Naive thymus-derived CD8-positive, alpha-beta T cell (primary cell): ENCODE measurements at regions of chrX and their contacts with region 1.

Region 1: GRCh38 chrX:71254092-71254941 is at the start of gene ZMYM3:
- DNase-seq: peak; percentile 68 to 93 (median 84)
- ATAC-seq: peak; percentile 82 to 84
- H3K4me3 Mint-ChIP-seq: peak within 1 kb of the TSS; percentile 84 to 98 (median 93)
- H3K27ac Mint-ChIP-seq: peak within 1 kb of the TSS; percentile 89 to 98 (median 97)
- H3K4me1 Mint-ChIP-seq: peaks cover 13 to 32% (median 23%) of the 10 kb centered on the region in 4 donors
- H3K27me3 Mint-ChIP-seq: no peaks in the 10 kb centered on the region
- polyA plus RNA-seq, gene ZMYM3: 4.8 to 6.5 (median 5.0) TPM

Region 2: GRCh38 chrX:71198066-71198465 is 56.3 kb before region 1 on chrX:
- POLR2A ChIA-PET with region 1: interaction called, 15 read pairs
- DNase-seq: peak in 3 of 10 donors; percentile 17 to 29 (median 22)
- ATAC-seq: peak; percentile 49 to 56
- H3K4me3 Mint-ChIP-seq: peak overlapping the region; percentile 78 to 94 (median 90)
- H3K27ac Mint-ChIP-seq: peak overlapping the region; percentile 86 to 98 (median 94)
- H3K4me1 Mint-ChIP-seq: peaks cover 15 to 35% (median 30%) of the 10 kb centered on the region in 4 donors
- H3K27me3 Mint-ChIP-seq: no peaks in the 10 kb centered on the region

Region 3: GRCh38 chrX:71283403-71284143 is 29.3 kb after region 1 on chrX and contains the start of gene NONO:
- POLR2A ChIA-PET with region 1: interaction called, 66 read pairs
- DNase-seq: peak; percentile 61 to 96 (median 86)
- ATAC-seq: peak; percentile 88 to 90
- H3K4me3 Mint-ChIP-seq: peak within 1 kb of the TSS; percentile 96 to 100 (median 99)
- H3K27ac Mint-ChIP-seq: peak within 1 kb of the TSS; percentile 99 to 100 (median 100)
- H3K4me1 Mint-ChIP-seq: peaks cover 1 to 32% (median 12%) of the 10 kb centered on the region in 4 donors
- H3K27me3 Mint-ChIP-seq: no peaks in the 10 kb centered on the region
- polyA plus RNA-seq, gene NONO: 177 to 199 (median 193) TPM